ENCODE measurements at regions of chr22 and their contacts with region 1.

Region 1: DNA sequence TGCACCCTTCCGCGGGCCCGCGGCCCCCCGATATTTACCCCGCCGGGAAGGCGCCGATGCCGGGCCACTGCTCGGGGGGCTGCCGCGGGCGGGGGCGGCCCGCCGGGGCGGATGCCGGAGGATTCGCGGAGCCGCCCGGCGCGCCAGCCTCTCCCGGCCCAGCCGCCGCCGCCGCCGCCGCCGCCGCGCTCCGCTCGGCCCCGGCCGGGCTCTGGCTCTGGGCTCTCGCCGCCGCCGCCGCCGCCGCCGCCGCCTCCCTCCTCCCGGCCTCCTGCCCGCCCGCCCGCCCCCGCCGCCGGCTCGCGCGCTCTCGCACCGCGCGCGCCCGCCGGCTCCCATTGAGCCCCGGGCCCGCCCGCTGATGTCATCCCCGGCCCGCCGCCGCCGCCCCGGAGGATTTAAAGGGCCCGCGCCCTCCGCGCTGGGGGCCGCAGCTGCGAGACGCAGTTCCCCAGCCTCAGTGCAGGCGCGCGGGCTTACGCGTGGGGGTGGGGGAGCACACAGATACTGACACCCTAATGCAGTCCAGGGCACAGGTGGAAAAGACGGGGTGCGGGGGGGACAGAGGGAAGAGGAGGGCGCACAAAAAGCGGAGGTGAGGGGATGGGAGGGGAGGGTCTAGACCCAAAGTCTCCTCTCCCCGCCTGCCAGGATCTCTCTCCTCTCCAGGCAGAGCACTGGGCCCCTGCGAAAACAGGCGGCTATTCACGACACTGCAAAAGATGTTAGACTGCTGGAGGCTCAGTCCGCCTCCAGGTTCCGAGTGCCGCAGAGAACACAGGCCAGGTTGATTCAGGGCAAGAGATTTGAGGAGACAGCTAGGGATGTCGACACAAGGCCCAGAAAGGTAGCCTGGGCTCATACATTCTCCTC is at the start of gene CSNK1E:
- DNase-seq: peak; percentile 69
- H3K4me3 Mint-ChIP-seq: peak within 1 kb of the TSS; percentile 93
- H3K27ac Mint-ChIP-seq: peak within 1 kb of the TSS; percentile 93
- H3K4me1 Mint-ChIP-seq: peaks cover 39% of the 10 kb centered on the region
- H3K27me3 Mint-ChIP-seq: no peaks in the 10 kb centered on the region
- CTCF ChIP-seq: no peak
- total RNA-seq, gene CSNK1E: 354 and 425 TPM in 2 replicates

Region 2: DNA sequence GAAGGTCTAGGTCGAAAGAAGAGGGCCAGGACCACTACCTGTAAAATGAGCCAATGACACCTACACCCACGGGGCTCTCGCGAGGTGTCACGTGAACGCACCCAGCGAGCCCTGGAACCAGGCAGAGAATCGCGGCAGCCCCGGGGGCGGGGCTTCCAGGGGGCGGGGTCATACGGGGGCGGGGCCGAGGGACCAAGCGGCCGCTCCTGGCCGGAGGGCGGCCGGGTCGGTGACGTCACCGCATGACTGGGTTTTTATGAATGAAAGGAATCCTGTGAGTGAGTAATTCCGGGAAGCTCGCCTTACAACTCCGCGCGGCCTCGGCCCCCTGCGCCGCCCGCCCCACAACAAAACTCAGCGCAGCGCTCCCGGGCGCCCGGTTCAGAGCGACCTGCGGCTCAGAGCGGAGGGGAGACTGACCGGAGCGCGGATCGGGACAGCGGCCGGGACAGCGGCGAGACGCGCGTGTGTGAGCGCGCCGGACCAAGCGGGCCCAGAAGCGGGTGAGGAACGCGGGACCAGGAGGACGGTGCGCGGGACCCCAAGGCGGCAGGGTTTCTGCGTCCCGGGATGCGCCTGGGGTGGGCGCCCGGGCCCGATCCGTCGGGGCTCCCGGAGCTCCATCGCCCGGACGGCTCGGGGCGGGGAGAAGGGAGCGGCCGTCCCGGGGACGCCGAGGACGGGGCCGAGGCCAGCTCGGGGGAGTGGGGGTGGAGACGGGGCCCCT is 115.5 kb before region 1 on chr22 and contains the start of gene MAFF:
- CTCF ChIA-PET with region 1: no interaction called
- POLR2A ChIA-PET with region 1: interaction called, 17 read pairs
- intact Hi-C with region 1: no loop called
- DNase-seq: peak; percentile 96
- H3K4me3 Mint-ChIP-seq: peak within 1 kb of the TSS; percentile 85
- H3K27ac Mint-ChIP-seq: peak within 1 kb of the TSS; percentile 80
- H3K4me1 Mint-ChIP-seq: peaks cover 23% of the 10 kb centered on the region
- H3K27me3 Mint-ChIP-seq: no peaks in the 10 kb centered on the region
- CTCF ChIP-seq: no peak
- total RNA-seq, gene MAFF: 54.7 and 71.4 TPM in 2 replicates

Region 3: DNA sequence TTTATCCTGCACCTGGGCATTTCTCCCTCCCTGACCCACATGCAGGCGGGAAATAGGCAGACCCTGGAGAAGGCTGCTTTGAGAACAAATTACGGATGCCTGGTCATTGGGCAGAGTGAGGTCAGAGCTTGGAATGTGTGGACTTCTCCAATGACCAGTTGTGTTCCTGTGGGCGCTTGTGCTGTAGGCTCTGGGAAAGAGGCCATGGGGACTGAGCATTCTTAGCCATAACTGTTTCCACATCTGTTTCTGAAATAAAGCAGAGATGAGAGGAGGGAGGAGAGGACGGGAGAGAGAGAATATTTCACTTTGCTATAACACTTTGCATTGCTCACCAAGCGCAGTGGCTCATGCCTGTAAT is 33.3 kb before region 1 on chr22:
- CTCF ChIA-PET with region 1: no interaction called
- POLR2A ChIA-PET with region 1: interaction called, 17 read pairs
- intact Hi-C with region 1: no loop called
- DNase-seq: no peak
- H3K4me3 Mint-ChIP-seq: no peak overlapping the region
- H3K27ac Mint-ChIP-seq: peak overlapping the region; percentile 61
- H3K4me1 Mint-ChIP-seq: peaks cover 16% of the 10 kb centered on the region
- H3K27me3 Mint-ChIP-seq: no peaks in the 10 kb centered on the region
- CTCF ChIP-seq: no peak

Region 4: GRCh38 chr22:38305471-38306448 is 11.6 kb before region 1 on chr22:
- CTCF ChIA-PET with region 1: interaction called, 10 read pairs
- POLR2A ChIA-PET with region 1: interaction called, 146 read pairs
- intact Hi-C with region 1: no loop called
- DNase-seq: peak; percentile 53
- H3K4me3 Mint-ChIP-seq: peak overlapping the region; percentile 38
- H3K27ac Mint-ChIP-seq: peak overlapping the region; percentile 98
- H3K4me1 Mint-ChIP-seq: peaks cover 64% of the 10 kb centered on the region
- H3K27me3 Mint-ChIP-seq: no peaks in the 10 kb centered on the region
- CTCF ChIP-seq: no peak

Region 5: GRCh38 chr22:38347897-38348750 is 30.8 kb after region 1 on chr22:
- CTCF ChIA-PET with region 1: interaction called, 3 read pairs
- POLR2A ChIA-PET with region 1: interaction called, 7 read pairs
- intact Hi-C with region 1: loop called (anchors 1 kb)
- DNase-seq: peak; percentile 72
- H3K4me3 Mint-ChIP-seq: no peak overlapping the region
- H3K27ac Mint-ChIP-seq: peak overlapping the region; percentile 81
- H3K4me1 Mint-ChIP-seq: peaks cover 14% of the 10 kb centered on the region
- H3K27me3 Mint-ChIP-seq: no peaks in the 10 kb centered on the region
- CTCF ChIP-seq: no peak

Region 6: GRCh38 chr22:38429499-38430068 is 112.2 kb after region 1 on chr22:
- CTCF ChIA-PET with region 1: no interaction called
- POLR2A ChIA-PET with region 1: no interaction called
- intact Hi-C with region 1: no loop called
- DNase-seq: no peak
- H3K4me3 Mint-ChIP-seq: no peak overlapping the region
- H3K27ac Mint-ChIP-seq: no peak overlapping the region
- H3K4me1 Mint-ChIP-seq: no peaks in the 10 kb centered on the region
- H3K27me3 Mint-ChIP-seq: peaks cover 6% of the 10 kb centered on the region
- CTCF ChIP-seq: no peak

Measured in MCF 10A (cell line).